ENCODE measurements at regions of chr11 and their contacts with region 1.

Region 1: GRCh38 chr11:62556108-62556871 is 9.7 kb upstream of the AHNAK start:
- DNase-seq: peak; percentile 88
- ATAC-seq: peak; percentile 74
- H3K4me3 ChIP-seq: peak overlapping the region; percentile 42
- H3K27ac ChIP-seq: peak overlapping the region; percentile 99
- H3K4me1 ChIP-seq: peaks cover 88% of the 10 kb centered on the region
- H3K27me3 ChIP-seq: no peaks in the 10 kb centered on the region
- CTCF ChIP-seq: no peak
- EP300 ChIP-seq: peak in 1 of 2 experiments; percentile 11; a peak in 1 of 4 replicates
- POLR2A ChIP-seq: peak; percentile 66; the same call in 1 of the 2 replicates
- RAD21 ChIP-seq: no peak

Region 2: DNA sequence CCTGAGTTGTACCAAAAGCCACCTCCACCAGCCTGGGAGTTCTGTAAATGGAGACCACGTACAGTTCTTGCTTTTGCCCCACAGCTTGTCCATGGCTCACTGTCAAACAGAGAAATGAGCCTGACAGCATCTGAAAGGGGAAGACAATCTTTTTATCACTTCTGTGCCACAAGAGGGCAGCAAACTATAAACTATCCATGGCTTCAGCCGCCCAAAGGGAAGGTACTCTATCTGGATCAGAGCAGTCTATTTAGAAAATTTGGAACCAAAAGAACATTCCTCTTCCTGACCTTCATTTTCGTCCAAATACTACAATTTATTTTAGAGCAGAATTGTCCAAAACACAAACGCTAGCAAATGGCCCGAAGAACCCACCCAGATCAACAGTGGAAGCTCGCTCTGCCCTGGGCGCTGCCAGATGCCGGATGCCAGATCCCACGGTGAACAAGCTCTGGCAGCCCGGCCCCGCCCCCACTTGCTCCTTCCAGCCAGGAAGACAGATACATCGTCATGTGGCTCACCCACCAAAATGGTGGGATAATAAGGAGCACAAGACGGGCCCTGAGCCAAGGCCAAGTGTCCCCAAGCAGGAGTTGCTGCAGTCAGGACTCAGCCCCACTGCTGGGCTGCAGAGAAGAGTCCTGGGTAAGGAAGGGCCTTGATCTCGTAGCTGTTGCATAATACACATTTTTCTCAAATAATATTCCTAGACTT is 161.3 kb before region 1 on chr11:
- CTCF ChIA-PET with region 1: interaction called, 48 read pairs
- POLR2A ChIA-PET with region 1: no interaction called
- RAD21 ChIA-PET with region 1: interaction called, 7 read pairs
- SMC1A ChIA-PET with region 1: interaction called, 17 read pairs
- in situ Hi-C with region 1: no loop called
- intact Hi-C with region 1: no loop called
- DNase-seq: peak; percentile 28
- ATAC-seq: peak; percentile 97
- H3K4me3 ChIP-seq: no peak overlapping the region
- H3K27ac ChIP-seq: no peak overlapping the region
- H3K4me1 ChIP-seq: no peaks in the 10 kb centered on the region
- H3K27me3 ChIP-seq: no peaks in the 10 kb centered on the region
- CTCF ChIP-seq: peak; percentile 51 to 82 (median 68); a peak in 5 of 6 replicates
- EP300 ChIP-seq: no peak
- POLR2A ChIP-seq: no peak
- RAD21 ChIP-seq: peak; percentile 86

Region 3: DNA sequence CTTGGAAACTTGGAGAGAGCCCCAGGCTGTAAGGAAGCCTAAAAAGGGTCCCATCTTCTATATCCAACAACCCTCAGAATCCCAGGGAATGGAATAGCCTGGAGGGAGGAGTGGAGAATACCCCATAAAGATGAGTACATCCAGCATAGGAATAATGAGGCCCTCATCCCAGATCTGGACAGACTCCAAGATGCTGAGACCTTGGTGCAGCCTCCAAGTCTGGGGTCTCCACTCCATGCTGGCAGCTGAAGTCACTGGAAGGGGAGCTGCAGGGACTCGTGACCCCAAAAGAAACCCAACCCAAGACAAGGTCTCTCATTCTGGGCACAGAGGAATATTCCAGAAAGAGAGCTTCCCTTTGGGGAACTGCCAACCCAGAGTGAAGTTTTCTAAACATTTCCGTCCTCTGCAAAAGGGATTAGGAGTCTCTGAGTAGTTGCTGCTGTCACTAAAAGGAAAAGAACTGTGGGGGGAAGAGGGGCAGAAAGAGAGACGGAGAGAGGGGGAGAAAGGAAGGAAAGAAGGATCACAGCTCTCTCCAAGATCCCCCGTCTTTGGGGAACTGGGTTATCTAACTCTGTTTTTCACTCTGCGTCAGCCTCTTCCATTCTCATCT is 136.9 kb before region 1 on chr11:
- CTCF ChIA-PET with region 1: interaction called, 98 read pairs
- POLR2A ChIA-PET with region 1: interaction called, 8 read pairs
- RAD21 ChIA-PET with region 1: interaction called, 74 read pairs
- SMC1A ChIA-PET with region 1: interaction called, 94 read pairs
- in situ Hi-C with region 1: loop called (anchors 10 kb)
- intact Hi-C with region 1: loop called (anchors 1 kb)
- DNase-seq: no peak
- ATAC-seq: no peak
- H3K4me3 ChIP-seq: no peak overlapping the region
- H3K27ac ChIP-seq: no peak overlapping the region
- H3K4me1 ChIP-seq: no peaks in the 10 kb centered on the region
- H3K27me3 ChIP-seq: no peaks in the 10 kb centered on the region; a peak in 1 of 4 replicates
- CTCF ChIP-seq: no peak
- EP300 ChIP-seq: no peak
- POLR2A ChIP-seq: no peak
- RAD21 ChIP-seq: no peak

Region 4: GRCh38 chr11:62497132-62497915 is 59.0 kb before region 1 on chr11:
- CTCF ChIA-PET with region 1: interaction called, 28 read pairs
- POLR2A ChIA-PET with region 1: no interaction called
- RAD21 ChIA-PET with region 1: interaction called, 5 read pairs
- SMC1A ChIA-PET with region 1: interaction called, 22 read pairs
- in situ Hi-C with region 1: no loop called
- intact Hi-C with region 1: no loop called
- DNase-seq: peak; percentile 13
- ATAC-seq: peak; percentile 75
- H3K4me3 ChIP-seq: no peak overlapping the region
- H3K27ac ChIP-seq: no peak overlapping the region
- H3K4me1 ChIP-seq: no peaks in the 10 kb centered on the region
- H3K27me3 ChIP-seq: peaks cover 0 to 2% of the 10 kb centered on the region in 2 experiments; a peak in 1 of 4 replicates
- CTCF ChIP-seq: peak; percentile 31 to 53 (median 37); a peak in 4 of 6 replicates
- EP300 ChIP-seq: no peak
- POLR2A ChIP-seq: no peak
- RAD21 ChIP-seq: peak; percentile 57

Region 5: GRCh38 chr11:62567018-62567633 is 10.8 kb after region 1 on chr11:
- CTCF ChIA-PET with region 1: interaction called, 56 read pairs
- POLR2A ChIA-PET with region 1: interaction called, 29 read pairs
- RAD21 ChIA-PET with region 1: interaction called, 14 read pairs
- SMC1A ChIA-PET with region 1: interaction called, 15 read pairs
- in situ Hi-C with region 1: no loop called
- intact Hi-C with region 1: no loop called
- DNase-seq: no peak
- ATAC-seq: peak; percentile 79
- H3K4me3 ChIP-seq: no peak overlapping the region
- H3K27ac ChIP-seq: peak overlapping the region; percentile 8
- H3K4me1 ChIP-seq: peaks cover 22% of the 10 kb centered on the region
- H3K27me3 ChIP-seq: no peaks in the 10 kb centered on the region
- CTCF ChIP-seq: no peak
- EP300 ChIP-seq: no peak
- POLR2A ChIP-seq: no peak
- RAD21 ChIP-seq: no peak

Region 6: GRCh38 chr11:62573592-62574362 is 17.5 kb after region 1 on chr11 and contains the start of gene EEF1G:
- CTCF ChIA-PET with region 1: interaction called, 56 read pairs
- POLR2A ChIA-PET with region 1: interaction called, 29 read pairs
- RAD21 ChIA-PET with region 1: interaction called, 25 read pairs
- SMC1A ChIA-PET with region 1: interaction called, 15 read pairs
- in situ Hi-C with region 1: no loop called
- intact Hi-C with region 1: no loop called
- DNase-seq: peak; percentile 99
- ATAC-seq: peak; percentile 96
- H3K4me3 ChIP-seq: peak within 1 kb of the TSS; percentile 99
- H3K27ac ChIP-seq: peak within 1 kb of the TSS; percentile 93
- H3K4me1 ChIP-seq: peaks cover 24% of the 10 kb centered on the region
- H3K27me3 ChIP-seq: no peaks in the 10 kb centered on the region
- CTCF ChIP-seq: no peak
- EP300 ChIP-seq: peak in 1 of 2 experiments; percentile 51; a peak in 1 of 4 replicates
- POLR2A ChIP-seq: peak; percentile 93
- RAD21 ChIP-seq: no peak
- polyA plus RNA-seq, gene EEF1G: 1,227 to 1,233 TPM

Region 7: DNA sequence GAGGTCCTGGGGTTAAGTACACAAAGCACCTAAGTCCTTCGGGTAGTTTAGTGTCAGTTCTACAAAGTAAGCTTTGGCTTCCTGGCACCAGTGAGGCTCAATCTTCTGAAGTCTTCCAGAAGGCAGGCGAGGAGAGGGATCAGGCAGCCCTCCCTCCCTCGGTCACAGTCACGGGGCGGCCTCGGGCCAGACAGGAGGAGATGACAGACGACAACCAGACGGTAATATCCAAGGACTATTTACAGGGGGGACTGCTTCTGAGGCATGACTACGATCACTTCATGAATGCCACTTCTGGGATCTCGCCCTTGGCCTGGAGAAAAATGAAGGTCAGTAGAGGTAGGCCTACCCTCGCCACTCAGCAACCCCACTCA is 235.9 kb after region 1 on chr11:
- CTCF ChIA-PET with region 1: no interaction called
- POLR2A ChIA-PET with region 1: no interaction called
- RAD21 ChIA-PET with region 1: no interaction called
- SMC1A ChIA-PET with region 1: no interaction called
- in situ Hi-C with region 1: no loop called
- intact Hi-C with region 1: no loop called
- DNase-seq: no peak
- ATAC-seq: no peak
- H3K4me3 ChIP-seq: peak overlapping the region; percentile 84; the same call in 1 of the 2 replicates
- H3K27ac ChIP-seq: no peak overlapping the region
- H3K4me1 ChIP-seq: peaks cover 11% of the 10 kb centered on the region
- H3K27me3 ChIP-seq: no peaks in the 10 kb centered on the region
- CTCF ChIP-seq: no peak
- EP300 ChIP-seq: no peak
- POLR2A ChIP-seq: no peak
- RAD21 ChIP-seq: no peak

Measured in GM12878 (cell line).